ENCODE measurements at regions of chr7 and their contacts with region 1.

Region 1: GRCh38 chr7:131654668-131655326 is 98.4 kb upstream of the PODXL start:
- DNase-seq: peak; percentile 60 to 94 (median 78)
- ATAC-seq: peak; percentile 96
- H3K4me3 ChIP-seq: no peak overlapping the region
- H3K27ac ChIP-seq: no peak overlapping the region
- H3K4me1 ChIP-seq: no peaks in the 10 kb centered on the region
- H3K27me3 ChIP-seq: no peaks in the 10 kb centered on the region
- CTCF ChIP-seq: peak; percentile 87 to 90

Region 2: DNA sequence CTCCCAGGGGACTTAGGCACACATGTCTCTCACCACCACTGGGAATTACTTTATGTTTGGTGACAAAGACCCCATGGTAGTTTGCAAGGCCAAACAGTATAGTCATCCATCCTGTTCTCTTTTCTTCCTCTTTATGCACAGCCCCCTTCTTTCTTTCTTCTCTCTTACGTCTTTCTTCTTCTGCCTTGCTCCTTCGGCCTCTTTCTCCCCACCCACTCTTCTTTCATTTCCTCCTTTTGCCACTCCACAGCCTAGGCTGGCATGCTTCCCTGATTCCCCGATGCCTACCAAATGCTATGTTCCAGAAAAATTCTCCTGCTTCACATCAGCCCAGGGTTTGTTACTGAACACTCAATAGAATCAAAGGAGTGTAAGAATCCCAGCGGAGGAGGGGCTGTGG is 389.6 kb before region 1 on chr7:
- intact Hi-C with region 1: no loop called
- DNase-seq: no peak
- ATAC-seq: peak; percentile 43
- H3K4me3 ChIP-seq: no peak overlapping the region
- H3K27ac ChIP-seq: no peak overlapping the region
- H3K4me1 ChIP-seq: no peaks in the 10 kb centered on the region
- H3K27me3 ChIP-seq: no peaks in the 10 kb centered on the region
- CTCF ChIP-seq: no peak

Region 3: DNA sequence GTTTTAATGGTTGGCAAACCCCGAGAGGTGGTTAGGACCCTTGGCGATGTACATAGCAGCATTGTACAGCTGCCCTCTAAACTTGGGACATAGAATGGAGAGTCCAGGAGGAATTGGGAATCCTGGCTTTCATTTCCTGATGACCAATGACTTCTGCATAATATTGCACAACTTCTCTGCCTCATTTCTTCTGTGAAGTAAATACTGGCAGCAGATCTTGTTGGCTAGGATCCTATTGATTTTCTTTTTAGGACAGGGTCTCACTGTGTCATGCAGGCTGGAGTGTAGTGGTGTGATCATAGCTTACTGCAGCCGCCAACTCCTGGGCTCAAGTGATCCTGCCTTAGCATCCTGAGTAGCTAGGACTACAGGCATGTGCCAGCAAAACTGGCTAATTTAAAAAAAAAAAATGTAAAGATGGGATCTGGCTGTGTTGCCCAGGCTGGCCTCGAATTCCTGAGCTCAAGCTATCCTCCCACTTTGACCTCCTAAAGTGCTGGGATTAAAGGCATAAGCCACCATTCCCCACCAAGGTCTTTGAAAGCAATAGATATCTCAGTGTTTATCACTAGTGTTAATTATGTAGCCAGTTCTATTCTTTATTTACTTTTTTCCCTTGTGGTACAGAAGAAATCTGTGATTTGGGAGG is 156.4 kb before region 1 on chr7:
- intact Hi-C with region 1: loop called in 1 of 2 experiments (anchors 10 kb)
- DNase-seq: peak in 1 of 4 donors; percentile 52
- ATAC-seq: no peak
- H3K4me3 ChIP-seq: no peak overlapping the region
- H3K27ac ChIP-seq: no peak overlapping the region
- H3K4me1 ChIP-seq: peaks cover 8 to 12% of the 10 kb centered on the region in 2 donors
- H3K27me3 ChIP-seq: no peaks in the 10 kb centered on the region
- CTCF ChIP-seq: no peak

Region 4: GRCh38 chr7:131507592-131508331 is 147.0 kb before region 1 on chr7:
- intact Hi-C with region 1: loop called in 1 of 2 experiments (anchors 2 kb)
- DNase-seq: peak; percentile 58 to 94 (median 80)
- ATAC-seq: peak; percentile 92
- H3K4me3 ChIP-seq: no peak overlapping the region
- H3K27ac ChIP-seq: no peak overlapping the region
- H3K4me1 ChIP-seq: peaks cover 10 to 15% of the 10 kb centered on the region in 2 donors
- H3K27me3 ChIP-seq: no peaks in the 10 kb centered on the region
- CTCF ChIP-seq: peak; percentile 75 to 85

Region 5: GRCh38 chr7:131562941-131563340 is 91.9 kb before region 1 on chr7:
- intact Hi-C with region 1: no loop called
- DNase-seq: no peak
- ATAC-seq: no peak
- H3K4me3 ChIP-seq: no peak overlapping the region
- H3K27ac ChIP-seq: no peak overlapping the region
- H3K4me1 ChIP-seq: peaks cover 3% of the 10 kb centered on the region in 2 donors
- H3K27me3 ChIP-seq: peaks cover 0 to 21% of the 10 kb centered on the region in 2 donors
- CTCF ChIP-seq: no peak

Measured in left lung (tissue), 14 donors.